Activated CD4-positive, alpha-beta memory T cell treated with anti-CD3 and anti-CD28 coated beads, Interleukin-2, amount 10 ng/mL, durations not matched to agents 7 days and 5 days (primary cell): ENCODE measurements at regions of chr18 and their contacts with region 1.

Region 1: DNA sequence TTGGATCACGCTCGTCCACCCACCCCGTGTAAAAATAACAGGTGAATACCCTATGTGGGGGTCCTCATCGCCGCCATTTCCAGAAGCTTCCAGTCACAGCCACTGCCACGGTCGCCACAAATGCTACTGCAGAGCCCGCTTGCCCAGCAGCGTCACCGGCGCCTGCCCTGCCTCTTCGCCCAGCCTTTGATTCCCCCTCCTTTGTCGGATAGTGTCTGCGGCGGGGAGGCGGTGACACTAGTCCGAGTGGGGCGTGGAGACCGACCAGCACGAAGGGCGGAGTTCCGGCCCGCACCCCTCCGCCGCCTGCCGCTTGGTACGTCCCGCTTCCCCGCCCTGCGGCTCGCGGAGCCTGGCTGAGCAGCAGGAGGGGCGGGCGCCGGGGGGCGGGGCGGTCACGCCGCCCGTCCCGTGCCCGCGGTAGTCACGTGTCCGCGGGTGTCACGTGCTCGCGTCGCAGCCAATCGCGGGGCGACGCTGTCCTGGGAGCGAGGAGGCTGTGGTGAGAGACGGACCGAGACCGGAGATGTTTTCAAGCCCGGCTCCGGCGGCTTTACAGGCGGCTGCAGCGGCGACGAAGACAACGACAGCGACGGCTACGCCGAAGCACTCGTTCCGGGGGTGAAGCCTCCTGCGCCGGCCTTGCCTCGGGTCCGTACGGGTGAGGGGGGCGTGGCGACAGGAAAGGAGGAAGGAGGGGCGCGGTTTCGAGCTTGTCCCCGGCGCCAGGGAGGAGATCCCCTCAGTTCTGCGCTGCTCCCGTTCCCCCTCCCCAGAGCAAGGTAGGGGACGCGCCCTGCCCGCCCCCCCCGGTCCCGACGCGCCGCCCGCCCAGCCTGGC is at the start of gene ANKRD12:
- DNase-seq: peak; percentile 99
- H3K4me3 Mint-ChIP-seq: peak within 1 kb of the TSS; percentile 86
- H3K27ac Mint-ChIP-seq: peak within 1 kb of the TSS; percentile 96
- H3K4me1 Mint-ChIP-seq: peaks cover 60% of the 10 kb centered on the region
- H3K27me3 Mint-ChIP-seq: no peaks in the 10 kb centered on the region
- total RNA-seq, gene ANKRD12: 103 to 111 TPM

Region 2: GRCh38 chr18:9082711-9083510 is 53.6 kb before region 1 on chr18:
- CTCF ChIA-PET with region 1: interaction called, 23 read pairs
- POLR2A ChIA-PET with region 1: interaction called, 752 read pairs
- DNase-seq: peak; percentile 74
- H3K4me3 Mint-ChIP-seq: peak overlapping the region; percentile 69
- H3K27ac Mint-ChIP-seq: peak overlapping the region; percentile 100
- H3K4me1 Mint-ChIP-seq: peaks cover 78% of the 10 kb centered on the region
- H3K27me3 Mint-ChIP-seq: no peaks in the 10 kb centered on the region

Region 3: GRCh38 chr18:9102508-9103375 is 33.8 kb before region 1 on chr18 and contains the start of gene NDUFV2:
- CTCF ChIA-PET with region 1: interaction called, 5 read pairs
- POLR2A ChIA-PET with region 1: interaction called, 752 read pairs
- DNase-seq: peak; percentile 99
- H3K4me3 Mint-ChIP-seq: peak within 1 kb of the TSS; percentile 94
- H3K27ac Mint-ChIP-seq: peak within 1 kb of the TSS; percentile 96
- H3K4me1 Mint-ChIP-seq: peaks cover 46% of the 10 kb centered on the region
- H3K27me3 Mint-ChIP-seq: no peaks in the 10 kb centered on the region
- total RNA-seq, gene NDUFV2: 288 to 295 TPM

Region 4: DNA sequence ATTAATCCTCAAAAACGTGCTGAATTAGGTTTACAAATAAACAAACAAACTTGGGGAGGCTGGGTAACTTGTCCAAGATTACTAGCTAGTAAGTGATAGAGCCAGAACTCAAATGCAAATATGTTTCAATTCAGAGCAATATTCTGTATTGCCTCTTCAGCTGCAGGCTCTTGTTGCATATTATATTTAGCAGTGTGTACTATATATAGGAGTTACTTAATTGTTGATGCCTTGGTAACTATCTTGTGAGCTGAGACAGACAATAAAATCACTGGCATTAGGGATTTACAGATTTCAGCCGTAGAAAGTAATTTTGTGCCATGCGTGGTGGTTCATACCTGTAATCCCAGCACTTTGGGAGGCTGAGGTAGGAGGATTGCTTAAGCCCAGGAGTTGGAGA is 10.2 kb before region 1 on chr18:
- CTCF ChIA-PET with region 1: interaction called, 6 read pairs
- POLR2A ChIA-PET with region 1: interaction called, 76 read pairs
- DNase-seq: no peak
- H3K4me3 Mint-ChIP-seq: no peak overlapping the region
- H3K27ac Mint-ChIP-seq: no peak overlapping the region
- H3K4me1 Mint-ChIP-seq: peaks cover 44% of the 10 kb centered on the region
- H3K27me3 Mint-ChIP-seq: no peaks in the 10 kb centered on the region

Region 5: DNA sequence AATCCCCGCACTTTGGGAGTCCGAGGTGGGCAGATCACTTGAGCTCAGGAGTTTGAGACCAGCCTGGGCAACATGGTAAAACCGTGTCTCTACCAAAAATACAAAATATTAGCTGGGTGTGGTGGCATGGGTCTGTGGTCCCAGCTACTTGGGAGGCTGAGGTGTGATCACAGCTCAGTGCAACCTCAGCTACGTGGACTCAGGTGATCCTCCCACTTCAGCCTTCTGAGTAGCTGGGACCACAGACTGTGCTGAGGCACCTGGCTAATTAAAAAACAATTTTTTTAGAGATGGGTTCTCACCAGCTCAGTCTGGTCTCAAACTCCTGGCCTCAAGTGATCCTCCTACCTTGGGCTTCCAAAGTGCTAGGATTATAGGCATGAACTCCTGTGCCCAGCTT is 23.5 kb after region 1 on chr18:
- CTCF ChIA-PET with region 1: no interaction called
- POLR2A ChIA-PET with region 1: no interaction called
- DNase-seq: no peak
- H3K4me3 Mint-ChIP-seq: no peak overlapping the region
- H3K27ac Mint-ChIP-seq: no peak overlapping the region
- H3K4me1 Mint-ChIP-seq: peaks cover 39% of the 10 kb centered on the region
- H3K27me3 Mint-ChIP-seq: no peaks in the 10 kb centered on the region

Region 6: GRCh38 chr18:9196568-9196967 is 60.0 kb after region 1 on chr18:
- CTCF ChIA-PET with region 1: no interaction called
- POLR2A ChIA-PET with region 1: no interaction called
- DNase-seq: no peak
- H3K4me3 Mint-ChIP-seq: no peak overlapping the region
- H3K27ac Mint-ChIP-seq: no peak overlapping the region
- H3K4me1 Mint-ChIP-seq: peaks cover 12% of the 10 kb centered on the region
- H3K27me3 Mint-ChIP-seq: no peaks in the 10 kb centered on the region